Calu3 (cell line): ENCODE measurements at regions of chr12 and their contacts with region 1.

Region 1: DNA sequence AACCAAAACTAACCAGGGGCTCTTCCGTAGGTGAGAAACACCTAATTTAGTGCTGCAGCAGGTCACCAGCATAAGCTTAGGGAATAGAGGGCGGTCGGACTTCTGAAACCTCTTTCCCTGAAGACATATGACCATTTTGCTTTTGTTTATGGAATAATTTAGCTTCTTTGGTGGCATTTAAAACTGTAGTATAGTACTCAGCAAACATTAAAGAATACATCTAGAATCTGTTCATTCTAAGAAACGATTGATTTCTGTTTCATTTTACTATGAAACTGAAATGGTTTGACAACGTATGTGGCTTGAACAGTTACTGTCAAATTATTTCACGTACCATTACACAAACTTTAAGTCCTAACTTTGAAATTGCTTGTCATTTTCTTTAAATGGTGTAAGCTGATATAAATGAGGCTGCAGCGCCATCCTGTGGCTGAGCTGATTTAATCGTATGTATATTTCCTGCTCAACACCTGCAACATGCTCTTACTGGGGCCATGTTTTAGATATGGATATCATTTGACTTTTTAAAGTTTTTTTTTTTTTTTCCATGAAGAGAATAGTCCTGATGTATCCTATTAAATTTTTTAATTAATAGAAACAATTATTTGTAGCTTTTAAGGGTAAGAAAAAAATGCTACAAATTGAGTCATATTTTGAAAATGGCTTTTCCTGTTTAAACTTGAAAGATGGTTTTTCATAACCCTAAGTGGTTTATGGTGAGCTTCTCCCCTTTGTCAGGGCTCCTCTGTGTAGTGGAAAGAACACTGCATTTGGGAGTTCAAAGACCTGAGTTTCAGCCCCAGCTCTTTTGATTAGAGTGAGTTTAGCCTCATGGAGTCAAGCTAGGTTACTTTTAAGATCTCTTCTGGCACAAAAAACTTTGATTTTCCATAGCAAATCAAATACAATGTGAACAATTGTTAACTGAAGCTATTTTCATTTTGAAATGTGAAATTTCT is 27.4 kb downstream of the CFAP54 start:
- DNase-seq: peak; percentile 75
- H3K4me3 Mint-ChIP-seq: no peak overlapping the region
- H3K27ac Mint-ChIP-seq: no peak overlapping the region
- H3K4me1 Mint-ChIP-seq: no peaks in the 10 kb centered on the region
- H3K27me3 Mint-ChIP-seq: no peaks in the 10 kb centered on the region
- CTCF ChIP-seq: peak; percentile 41

Region 2: GRCh38 chr12:96015672-96016071 is 501.1 kb before region 1 on chr12:
- CTCF ChIA-PET with region 1: interaction called, 7 read pairs
- intact Hi-C with region 1: loop called (anchors 1 kb)
- DNase-seq: peak; percentile 49
- H3K4me3 Mint-ChIP-seq: no peak overlapping the region
- H3K27ac Mint-ChIP-seq: no peak overlapping the region
- H3K4me1 Mint-ChIP-seq: no peaks in the 10 kb centered on the region
- H3K27me3 Mint-ChIP-seq: no peaks in the 10 kb centered on the region
- CTCF ChIP-seq: peak; percentile 48

Region 3: GRCh38 chr12:96061864-96062453 is 454.8 kb before region 1 on chr12:
- CTCF ChIA-PET with region 1: interaction called, 3 read pairs
- intact Hi-C with region 1: loop called (anchors 1 kb)
- DNase-seq: peak; percentile 82
- H3K4me3 Mint-ChIP-seq: no peak overlapping the region
- H3K27ac Mint-ChIP-seq: no peak overlapping the region
- H3K4me1 Mint-ChIP-seq: no peaks in the 10 kb centered on the region
- H3K27me3 Mint-ChIP-seq: no peaks in the 10 kb centered on the region
- CTCF ChIP-seq: peak; percentile 72

Region 4: GRCh38 chr12:96274331-96274730 is 242.4 kb before region 1 on chr12:
- CTCF ChIA-PET with region 1: no interaction called
- intact Hi-C with region 1: loop called (anchors 10 kb)
- DNase-seq: no peak
- H3K4me3 Mint-ChIP-seq: no peak overlapping the region
- H3K27ac Mint-ChIP-seq: no peak overlapping the region
- H3K4me1 Mint-ChIP-seq: peaks cover 8% of the 10 kb centered on the region
- H3K27me3 Mint-ChIP-seq: no peaks in the 10 kb centered on the region
- CTCF ChIP-seq: no peak